IMR-90 (cell line): ENCODE measurements at regions of chr21 and their contacts with region 1.

Region 1: DNA sequence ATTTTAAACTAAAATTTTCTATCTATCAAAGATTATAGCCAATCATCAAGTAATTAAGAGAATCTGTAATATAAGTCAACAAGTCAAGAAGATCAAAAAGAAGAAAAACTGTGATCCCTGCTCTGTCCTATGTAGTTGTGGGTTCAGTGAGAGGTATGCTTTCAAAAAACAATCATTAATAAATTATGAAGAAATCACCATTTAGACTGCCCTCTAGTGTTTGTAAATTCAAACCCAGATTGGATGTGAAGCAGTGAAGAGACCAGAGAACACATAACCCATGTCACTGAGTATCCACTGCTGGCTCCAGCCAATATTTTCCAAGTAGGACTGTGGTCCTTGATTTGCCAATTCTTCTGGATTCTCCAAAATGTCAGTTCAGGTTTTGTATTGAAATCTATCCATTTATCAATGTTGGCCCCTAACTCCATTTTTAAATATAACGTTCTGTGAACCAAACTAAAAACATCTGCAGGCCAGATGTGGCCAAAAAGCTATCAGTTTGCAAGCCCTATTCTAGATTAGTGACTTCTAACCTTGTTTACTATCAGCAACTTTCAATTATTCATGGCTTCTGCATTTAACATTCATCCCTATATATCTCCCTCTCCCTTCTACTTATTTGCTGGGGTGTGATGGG is 467.5 kb upstream of the CXADR start:
- DNase-seq: peak; percentile 15
- ATAC-seq: peak; percentile 84
- H3K4me3 ChIP-seq: no peak overlapping the region
- H3K27ac ChIP-seq: no peak overlapping the region
- H3K4me1 ChIP-seq: no peaks in the 10 kb centered on the region; the same call in 1 of the 2 replicates
- H3K27me3 ChIP-seq: no peaks in the 10 kb centered on the region
- CTCF ChIP-seq: peak; percentile 47
- POLR2A ChIP-seq: no peak
- RAD21 ChIP-seq: peak; percentile 36; the same call in 1 of the 2 replicates

Region 2: GRCh38 chr21:16454399-16454798 is 590.9 kb before region 1 on chr21:
- CTCF ChIA-PET with region 1: no interaction called
- POLR2A ChIA-PET with region 1: no interaction called
- dilution Hi-C with region 1: no loop called
- in situ Hi-C with region 1: no loop called
- intact Hi-C with region 1: loop called (anchors 5 kb)
- DNase-seq: no peak
- ATAC-seq: peak; percentile 77
- H3K4me3 ChIP-seq: no peak overlapping the region
- H3K27ac ChIP-seq: no peak overlapping the region
- H3K4me1 ChIP-seq: no peaks in the 10 kb centered on the region
- H3K27me3 ChIP-seq: no peaks in the 10 kb centered on the region
- CTCF ChIP-seq: no peak; the same call in 1 of the 2 replicates
- POLR2A ChIP-seq: no peak
- RAD21 ChIP-seq: peak; percentile 40

Region 3: DNA sequence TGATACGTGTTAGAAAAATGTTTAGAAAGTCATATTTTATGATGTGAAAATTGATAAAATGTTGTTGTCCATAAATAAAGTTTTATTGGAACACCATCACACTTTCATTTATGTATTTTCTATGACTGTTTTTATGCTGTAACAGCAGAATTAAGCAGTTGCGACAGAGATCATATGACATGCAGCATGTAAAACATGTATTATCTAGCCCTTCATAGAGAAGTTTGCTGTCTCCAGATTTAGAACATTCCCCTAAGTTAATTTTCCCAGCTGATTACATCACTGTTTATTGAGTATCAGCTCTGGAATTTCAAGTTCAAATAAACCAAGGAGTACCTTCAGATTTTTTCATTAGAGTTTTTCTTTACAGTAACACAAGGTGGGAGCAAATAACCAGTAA is 522.8 kb before region 1 on chr21:
- CTCF ChIA-PET with region 1: no interaction called
- POLR2A ChIA-PET with region 1: no interaction called
- dilution Hi-C with region 1: no loop called
- in situ Hi-C with region 1: no loop called
- intact Hi-C with region 1: loop called (anchors 5 kb)
- DNase-seq: peak; percentile 83
- ATAC-seq: peak; percentile 75
- H3K4me3 ChIP-seq: no peak overlapping the region
- H3K27ac ChIP-seq: no peak overlapping the region
- H3K4me1 ChIP-seq: no peaks in the 10 kb centered on the region
- H3K27me3 ChIP-seq: no peaks in the 10 kb centered on the region
- CTCF ChIP-seq: no peak
- POLR2A ChIP-seq: no peak
- RAD21 ChIP-seq: peak; percentile 41; the same call in 1 of the 2 replicates

Region 4: GRCh38 chr21:16588433-16588860 is 456.9 kb before region 1 on chr21:
- CTCF ChIA-PET with region 1: no interaction called
- POLR2A ChIA-PET with region 1: no interaction called
- dilution Hi-C with region 1: no loop called
- in situ Hi-C with region 1: no loop called
- intact Hi-C with region 1: no loop called
- DNase-seq: peak; percentile 84
- ATAC-seq: peak; percentile 98
- H3K4me3 ChIP-seq: peak overlapping the region; percentile 46
- H3K27ac ChIP-seq: no peak overlapping the region
- H3K4me1 ChIP-seq: peaks cover 6% of the 10 kb centered on the region; the same call in 1 of the 2 replicates
- H3K27me3 ChIP-seq: no peaks in the 10 kb centered on the region
- CTCF ChIP-seq: no peak
- POLR2A ChIP-seq: no peak; the same call in 1 of the 2 replicates
- RAD21 ChIP-seq: 0 out of 2 replicates have a peak, but pooled peaks have one; percentile 14

Region 5: GRCh38 chr21:16942703-16943102 is 102.6 kb before region 1 on chr21:
- CTCF ChIA-PET with region 1: no interaction called
- POLR2A ChIA-PET with region 1: no interaction called
- dilution Hi-C with region 1: no loop called
- in situ Hi-C with region 1: no loop called
- intact Hi-C with region 1: loop called (anchors 2 kb)
- DNase-seq: peak; percentile 17
- ATAC-seq: 0 out of 2 replicates have a peak, but pooled peaks have one; percentile 27
- H3K4me3 ChIP-seq: no peak overlapping the region
- H3K27ac ChIP-seq: no peak overlapping the region
- H3K4me1 ChIP-seq: no peaks in the 10 kb centered on the region
- H3K27me3 ChIP-seq: no peaks in the 10 kb centered on the region
- CTCF ChIP-seq: peak; percentile 35
- POLR2A ChIP-seq: no peak
- RAD21 ChIP-seq: peak; percentile 50

Region 6: GRCh38 chr21:17295997-17296396 is 250.7 kb after region 1 on chr21:
- CTCF ChIA-PET with region 1: no interaction called
- POLR2A ChIA-PET with region 1: no interaction called
- dilution Hi-C with region 1: no loop called
- in situ Hi-C with region 1: no loop called
- intact Hi-C with region 1: no loop called
- DNase-seq: no peak
- ATAC-seq: no peak
- H3K4me3 ChIP-seq: no peak overlapping the region
- H3K27ac ChIP-seq: no peak overlapping the region
- H3K4me1 ChIP-seq: no peaks in the 10 kb centered on the region
- H3K27me3 ChIP-seq: no peaks in the 10 kb centered on the region
- CTCF ChIP-seq: no peak
- POLR2A ChIP-seq: no peak
- RAD21 ChIP-seq: no peak